Upper lobe of right lung (tissue), 1 donor: ENCODE measurements at regions of chr1 and their contacts with region 1.

Region 1: GRCh38 chr1:108512239-108512981 is 47.5 kb upstream of the EEIG2 start:
- DNase-seq: no peak
- ATAC-seq: peak; percentile 73
- H3K4me3 ChIP-seq: no peak overlapping the region
- H3K27ac ChIP-seq: no peak overlapping the region
- H3K4me1 ChIP-seq: no peaks in the 10 kb centered on the region
- H3K27me3 ChIP-seq: no peaks in the 10 kb centered on the region
- CTCF ChIP-seq: peak; percentile 93

Region 2: GRCh38 chr1:108643492-108644335 is 131.3 kb after region 1 on chr1:
- intact Hi-C with region 1: loop called (anchors 10 kb)
- DNase-seq: no peak
- ATAC-seq: peak; percentile 48
- H3K4me3 ChIP-seq: no peak overlapping the region
- H3K27ac ChIP-seq: no peak overlapping the region
- H3K4me1 ChIP-seq: peaks cover 18% of the 10 kb centered on the region
- H3K27me3 ChIP-seq: no peaks in the 10 kb centered on the region
- CTCF ChIP-seq: peak; percentile 65